Panc1 (cell line): ENCODE measurements at regions of chr20 and their contacts with region 1.

Region 1: GRCh38 chr20:35788796-35789195 is 17.0 kb downstream of the PHF20 start:
- DNase-seq: no peak
- ATAC-seq: no peak
- H3K4me3 ChIP-seq: no peak overlapping the region
- H3K27ac ChIP-seq: no peak overlapping the region
- H3K4me1 ChIP-seq: no peaks in the 10 kb centered on the region
- H3K27me3 ChIP-seq: no peaks in the 10 kb centered on the region
- CTCF ChIP-seq: no peak

Region 2: DNA sequence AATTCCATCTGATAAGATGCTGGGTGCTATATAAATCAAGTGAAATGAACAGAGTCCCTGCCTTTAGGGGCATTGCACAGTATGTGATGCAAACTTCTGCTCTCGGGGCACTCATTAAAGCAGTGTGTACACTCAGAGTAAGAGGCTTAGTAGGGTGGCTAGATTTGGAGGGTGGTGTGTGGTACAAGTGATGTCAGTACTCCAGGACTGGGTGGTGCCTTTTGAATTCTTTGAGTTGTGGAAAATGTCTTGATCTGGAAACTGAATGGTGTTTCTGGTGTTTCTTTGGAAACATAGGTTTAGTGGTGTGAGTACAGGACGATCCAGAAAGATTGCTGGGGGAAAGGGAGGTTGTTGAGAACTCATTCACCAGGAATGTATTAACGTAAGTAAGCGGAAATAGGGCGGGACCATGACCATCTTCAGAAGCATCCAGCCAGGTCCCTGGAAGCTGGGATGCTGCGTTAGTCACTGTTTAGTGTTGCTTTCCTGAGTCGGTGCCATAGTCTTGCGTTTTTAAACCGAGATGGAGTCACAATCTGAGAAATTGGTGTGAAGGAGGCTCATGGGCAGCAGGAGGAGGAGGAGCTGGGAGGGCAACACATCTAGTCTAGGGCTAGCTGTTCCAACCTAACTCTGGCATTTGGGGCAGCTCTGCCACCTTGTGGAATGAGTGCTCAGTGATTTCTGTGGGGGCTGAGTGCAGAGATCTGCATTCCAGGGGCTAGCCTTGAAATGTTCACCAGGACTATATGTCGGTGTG is 95.2 kb after region 1 on chr20:
- CTCF ChIA-PET with region 1: no interaction called
- POLR2A ChIA-PET with region 1: no interaction called
- in situ Hi-C with region 1: no loop called
- intact Hi-C with region 1: no loop called
- DNase-seq: peak; percentile 95
- ATAC-seq: peak; percentile 95
- H3K4me3 ChIP-seq: peak overlapping the region; percentile 23 to 52
- H3K27ac ChIP-seq: peak overlapping the region; percentile 69
- H3K4me1 ChIP-seq: peaks cover 10% of the 10 kb centered on the region
- H3K27me3 ChIP-seq: no peaks in the 10 kb centered on the region
- CTCF ChIP-seq: peak; percentile 93

Region 3: DNA sequence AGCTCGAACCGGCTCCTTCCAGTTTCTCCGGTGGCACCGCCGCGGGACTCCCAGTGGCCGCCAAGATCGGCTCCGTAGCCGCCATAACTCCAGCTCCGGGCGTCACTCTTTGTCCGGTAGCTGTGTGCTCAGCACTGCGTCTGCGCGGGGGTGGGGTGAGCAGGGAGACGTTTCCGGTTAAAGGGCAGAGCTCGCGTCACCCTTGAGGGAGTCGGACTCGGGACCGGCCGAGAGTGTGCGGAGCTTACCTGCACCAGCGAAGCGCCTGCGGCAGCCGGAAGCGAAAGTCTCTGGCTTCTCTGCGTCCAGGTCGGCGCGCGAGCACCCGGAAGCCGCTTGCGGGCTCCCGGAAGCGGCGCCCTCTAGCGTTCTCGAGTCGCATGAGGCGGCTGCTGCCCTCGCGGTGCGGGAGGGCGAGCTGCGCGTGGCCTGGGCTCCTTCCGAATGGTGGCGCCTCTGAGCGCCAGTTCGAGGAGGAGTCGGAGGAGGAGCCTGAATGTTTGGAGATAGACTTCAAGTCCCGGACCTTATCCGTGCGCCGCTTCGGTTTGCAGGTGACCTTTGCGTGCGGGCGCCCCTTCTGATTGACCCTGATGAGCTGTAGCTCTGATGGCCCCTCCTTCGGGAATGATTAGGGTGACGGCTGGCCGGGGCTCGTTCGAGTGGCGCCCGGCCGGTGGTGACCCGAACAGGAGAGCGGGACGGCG is 165.6 kb after region 1 on chr20 and contains the start of gene SCAND1:
- CTCF ChIA-PET with region 1: interaction called, 11 read pairs
- POLR2A ChIA-PET with region 1: no interaction called
- in situ Hi-C with region 1: no loop called
- intact Hi-C with region 1: no loop called
- DNase-seq: peak; percentile 93
- ATAC-seq: peak; percentile 95
- H3K4me3 ChIP-seq: peak within 1 kb of the TSS; percentile 85 to 95
- H3K27ac ChIP-seq: peak within 1 kb of the TSS; percentile 92
- H3K4me1 ChIP-seq: peaks cover 8% of the 10 kb centered on the region
- H3K27me3 ChIP-seq: no peaks in the 10 kb centered on the region
- CTCF ChIP-seq: peak; percentile 100
- total RNA-seq, gene SCAND1: 59.6 TPM